Activated CD4-positive, alpha-beta T cell treated with anti-CD3 and anti-CD28 coated beads, Interleukin-2, amount 10 ng/mL, durations not matched to agents 24 days and 14 days (primary cell): ENCODE measurements at regions of chr2 and their contacts with region 1.

Region 1: DNA sequence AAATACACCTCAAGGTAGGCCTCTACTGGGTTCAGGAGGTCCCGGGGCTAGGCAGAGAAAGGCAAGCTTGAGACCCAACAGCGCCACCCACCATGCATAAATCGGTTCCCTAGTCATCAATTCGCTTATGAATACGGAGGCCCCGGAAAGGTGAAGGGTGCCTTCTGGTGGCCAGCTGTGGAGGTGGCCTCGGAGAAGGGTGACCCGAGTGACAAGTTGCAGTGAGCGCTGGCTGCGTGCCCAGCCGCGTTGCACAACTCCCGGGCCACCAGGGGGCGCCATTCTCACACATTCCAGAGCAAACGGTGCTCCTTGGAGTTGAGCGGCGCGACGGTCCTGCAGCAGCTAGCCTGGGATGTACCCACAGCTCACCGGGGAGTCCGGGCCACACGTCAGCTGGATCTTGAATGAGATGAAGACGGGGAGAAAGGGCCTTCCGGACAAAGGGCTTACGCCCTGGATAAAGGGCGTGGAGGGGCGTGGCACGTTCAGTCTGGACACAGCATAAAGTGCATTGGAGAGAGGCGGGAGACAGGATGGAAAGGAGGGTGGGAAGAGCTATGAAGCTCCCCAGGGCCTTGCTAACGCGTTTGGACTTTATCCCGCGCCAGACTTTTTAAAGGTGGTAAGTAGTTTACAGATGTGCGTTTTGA is 20.4 kb downstream of the TMSB10 start:
- DNase-seq: peak; percentile 99
- H3K4me3 Mint-ChIP-seq: peak overlapping the region; percentile 93
- H3K27ac Mint-ChIP-seq: peak overlapping the region; percentile 93
- H3K4me1 Mint-ChIP-seq: peaks cover 37% of the 10 kb centered on the region
- H3K27me3 Mint-ChIP-seq: no peaks in the 10 kb centered on the region

Region 2: GRCh38 chr2:84516234-84516986 is 409.4 kb before region 1 on chr2 and contains the start of gene DNAH6:
- intact Hi-C with region 1: loop called (anchors 5 kb)
- DNase-seq: peak; percentile 96
- H3K4me3 Mint-ChIP-seq: peak within 1 kb of the TSS; percentile 88
- H3K27ac Mint-ChIP-seq: peak within 1 kb of the TSS; percentile 47
- H3K4me1 Mint-ChIP-seq: peaks cover 11% of the 10 kb centered on the region
- H3K27me3 Mint-ChIP-seq: peaks cover 27% of the 10 kb centered on the region
- total RNA-seq, gene DNAH6: 0.17 and 0.23 TPM in 2 replicates

Region 3: DNA sequence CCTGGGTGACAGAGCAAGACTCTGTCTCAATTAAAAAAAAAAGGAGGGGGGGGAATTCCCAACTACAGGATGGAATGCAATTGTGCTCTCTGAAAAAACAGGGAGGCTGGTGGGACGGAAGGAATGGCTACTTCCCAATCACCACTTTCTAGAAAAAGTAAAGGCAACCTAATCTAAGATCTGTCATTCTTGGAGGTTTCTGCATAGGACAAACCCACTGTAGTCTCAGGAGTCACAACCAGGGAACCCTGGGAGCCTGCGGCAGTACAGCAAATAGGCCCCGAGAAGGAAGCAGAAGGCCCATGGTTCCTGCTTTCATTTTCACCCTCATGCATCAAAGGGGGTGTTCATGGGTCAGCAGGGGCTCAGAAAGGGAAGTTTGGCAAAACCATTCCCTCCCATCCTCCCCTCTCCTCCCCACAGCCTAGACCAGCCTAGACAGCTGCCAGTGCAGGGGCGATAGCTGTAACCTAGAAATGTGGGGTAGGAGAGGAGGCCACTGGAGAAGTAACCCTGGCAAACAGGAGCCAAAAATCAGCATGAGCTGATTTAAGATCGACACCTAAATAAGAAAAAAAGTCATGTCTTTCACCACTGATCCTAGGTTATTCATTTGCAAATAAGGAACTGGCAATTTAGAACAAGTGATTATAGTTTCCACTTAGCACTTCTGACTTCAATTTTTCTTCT is 92.9 kb before region 1 on chr2:
- intact Hi-C with region 1: loop called (anchors 5 kb)
- DNase-seq: peak; percentile 81
- H3K4me3 Mint-ChIP-seq: peak overlapping the region; percentile 73
- H3K27ac Mint-ChIP-seq: peak overlapping the region; percentile 82
- H3K4me1 Mint-ChIP-seq: peaks cover 40% of the 10 kb centered on the region
- H3K27me3 Mint-ChIP-seq: no peaks in the 10 kb centered on the region

Region 4: GRCh38 chr2:84905181-84906107 is 20.4 kb before region 1 on chr2 and contains the start of gene TMSB10:
- intact Hi-C with region 1: loop called (anchors 1 kb)
- DNase-seq: peak; percentile 97
- H3K4me3 Mint-ChIP-seq: peak within 1 kb of the TSS; percentile 91
- H3K27ac Mint-ChIP-seq: peak within 1 kb of the TSS; percentile 95
- H3K4me1 Mint-ChIP-seq: peaks cover 62% of the 10 kb centered on the region
- H3K27me3 Mint-ChIP-seq: no peaks in the 10 kb centered on the region
- total RNA-seq, gene TMSB10: 2,196 and 2,218 TPM in 2 replicates

Region 5: GRCh38 chr2:84970868-84971509 is 45.1 kb after region 1 on chr2 and contains the start of gene KCMF1:
- intact Hi-C with region 1: loop called (anchors 1 kb)
- DNase-seq: peak; percentile 92
- H3K4me3 Mint-ChIP-seq: peak within 1 kb of the TSS; percentile 95
- H3K27ac Mint-ChIP-seq: peak within 1 kb of the TSS; percentile 100
- H3K4me1 Mint-ChIP-seq: peaks cover 35% of the 10 kb centered on the region
- H3K27me3 Mint-ChIP-seq: no peaks in the 10 kb centered on the region
- total RNA-seq, gene KCMF1: 98.1 and 101 TPM in 2 replicates

Region 6: DNA sequence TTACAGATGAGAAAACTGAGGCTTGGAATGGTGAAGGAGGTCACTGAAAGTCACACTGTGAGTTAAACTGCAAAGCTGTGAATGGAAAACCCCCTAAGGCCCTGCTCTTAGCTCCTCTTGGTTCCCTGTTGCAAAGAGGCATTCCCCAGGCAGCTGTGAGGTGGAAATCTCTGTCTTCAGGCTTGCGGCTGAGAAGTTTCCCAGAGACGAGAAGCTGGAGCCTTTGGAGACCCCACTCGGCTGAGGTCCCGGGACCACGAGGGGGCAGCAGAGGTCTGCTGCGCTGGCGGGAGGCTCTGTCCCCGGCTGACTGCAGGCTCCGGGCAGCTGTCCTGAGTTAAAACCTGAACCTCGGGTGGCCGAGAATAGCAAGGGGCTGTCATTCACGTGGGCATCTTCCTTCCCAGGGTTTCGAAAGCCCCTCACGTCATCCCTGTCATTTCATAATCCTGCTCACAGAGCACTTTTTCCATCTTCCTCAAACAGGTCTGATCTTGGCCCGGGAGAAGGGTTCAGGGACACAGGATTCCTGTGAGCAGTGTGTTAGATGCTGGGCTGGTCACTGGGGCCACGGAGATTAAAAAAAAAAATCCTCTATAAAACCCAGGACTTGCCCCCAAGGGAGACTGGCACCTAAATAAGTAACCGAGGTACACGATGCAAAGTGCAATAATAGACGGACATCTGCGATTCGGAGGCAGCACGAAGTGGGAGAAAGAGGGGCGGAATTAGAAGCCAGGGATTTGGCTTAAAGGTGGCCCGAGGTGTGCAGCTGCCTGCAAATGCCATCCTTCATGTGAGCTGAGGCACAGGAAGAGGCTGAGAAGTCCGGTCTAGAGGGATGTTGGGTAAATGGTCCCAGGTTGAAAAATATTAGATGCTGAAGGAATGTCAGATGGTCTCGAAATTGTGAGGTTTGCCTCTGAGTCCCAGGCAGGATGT is 803.3 kb after region 1 on chr2:
- intact Hi-C with region 1: no loop called
- DNase-seq: peak; percentile 93
- H3K4me3 Mint-ChIP-seq: no peak overlapping the region
- H3K27ac Mint-ChIP-seq: no peak overlapping the region
- H3K4me1 Mint-ChIP-seq: peaks cover 3% of the 10 kb centered on the region
- H3K27me3 Mint-ChIP-seq: peaks cover 32% of the 10 kb centered on the region